Gastrocnemius medialis (tissue), 4 donors: ENCODE measurements at regions of chr12 and their contacts with region 1.

Region 1: GRCh38 chr12:47963340-47964040 is at the start of gene TMEM106C:
- DNase-seq: peak; percentile 72 to 87
- ATAC-seq: peak; percentile 88 to 91
- H3K4me3 ChIP-seq: peak within 1 kb of the TSS; percentile 83 to 97 (median 95)
- H3K27ac ChIP-seq: peak within 1 kb of the TSS; percentile 67 to 77 (median 70)
- H3K4me1 ChIP-seq: peaks cover 11 to 14% of the 10 kb centered on the region in 2 donors
- H3K27me3 ChIP-seq: no peaks in the 10 kb centered on the region
- CTCF ChIP-seq: peak; percentile 88 to 99 (median 96)
- POLR2A ChIP-seq: peak in 1 of 2 donors; percentile 7
- total RNA-seq, gene TMEM106C: 11.8 to 27.1 (median 24.8) TPM

Region 2: GRCh38 chr12:47870175-47870781 is 93.2 kb before region 1 on chr12:
- in situ Hi-C with region 1: no loop called
- intact Hi-C with region 1: loop called (anchors 1 kb)
- DNase-seq: peak; percentile 48 to 83
- ATAC-seq: peak; percentile 92 to 97
- H3K4me3 ChIP-seq: no peak overlapping the region
- H3K27ac ChIP-seq: peak overlapping the region; percentile 74 to 84 (median 78)
- H3K4me1 ChIP-seq: peaks cover 17 to 19% of the 10 kb centered on the region in 2 donors
- H3K27me3 ChIP-seq: no peaks in the 10 kb centered on the region
- CTCF ChIP-seq: peak; percentile 12 to 41 (median 23)
- POLR2A ChIP-seq: peak; percentile 7 to 30

Region 3: DNA sequence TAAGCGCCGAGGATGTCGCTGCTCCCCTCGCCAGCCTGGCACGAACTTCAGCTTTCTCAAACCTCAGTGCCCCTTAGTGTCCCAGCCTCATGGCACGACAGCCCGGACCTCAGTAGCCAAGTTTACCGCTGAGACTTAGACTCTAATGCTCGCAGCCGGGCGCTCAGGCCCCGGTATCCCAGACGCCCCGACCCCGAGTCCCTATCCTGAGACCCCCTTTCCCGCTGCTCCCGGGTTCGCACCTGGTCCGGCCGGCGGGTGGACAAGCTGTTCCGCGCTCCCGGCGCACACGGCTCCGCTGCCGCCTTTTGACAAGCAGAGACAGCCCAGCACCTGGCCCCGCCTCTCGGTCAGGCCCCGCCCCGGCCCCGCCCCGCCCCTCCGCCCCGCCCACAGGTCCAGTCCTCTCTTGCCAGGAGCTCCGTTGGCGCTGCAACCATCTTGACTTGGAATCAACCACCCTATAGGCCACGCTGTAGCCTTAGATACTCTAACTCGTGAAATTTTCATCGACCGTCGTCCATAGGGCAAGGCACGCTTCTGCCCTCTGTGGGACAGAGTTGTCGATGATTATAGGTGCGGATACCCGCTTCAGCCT is 58.7 kb before region 1 on chr12 and contains the start of gene VDR:
- in situ Hi-C with region 1: no loop called
- intact Hi-C with region 1: loop called (anchors 1 kb)
- DNase-seq: peak; percentile 63 to 74
- ATAC-seq: peak; percentile 83
- H3K4me3 ChIP-seq: peak within 1 kb of the TSS; percentile 60 to 83 (median 70)
- H3K27ac ChIP-seq: peak within 1 kb of the TSS; percentile 58 to 81 (median 70)
- H3K4me1 ChIP-seq: peaks cover 20% of the 10 kb centered on the region in 2 donors
- H3K27me3 ChIP-seq: peaks cover 0 to 10% (median 4%) of the 10 kb centered on the region in 3 donors
- CTCF ChIP-seq: peak in 1 of 5 experiments; percentile 20
- POLR2A ChIP-seq: peak; percentile 79 to 84
- total RNA-seq, gene VDR: 3.2 to 6.1 (median 4.4) TPM

Region 4: DNA sequence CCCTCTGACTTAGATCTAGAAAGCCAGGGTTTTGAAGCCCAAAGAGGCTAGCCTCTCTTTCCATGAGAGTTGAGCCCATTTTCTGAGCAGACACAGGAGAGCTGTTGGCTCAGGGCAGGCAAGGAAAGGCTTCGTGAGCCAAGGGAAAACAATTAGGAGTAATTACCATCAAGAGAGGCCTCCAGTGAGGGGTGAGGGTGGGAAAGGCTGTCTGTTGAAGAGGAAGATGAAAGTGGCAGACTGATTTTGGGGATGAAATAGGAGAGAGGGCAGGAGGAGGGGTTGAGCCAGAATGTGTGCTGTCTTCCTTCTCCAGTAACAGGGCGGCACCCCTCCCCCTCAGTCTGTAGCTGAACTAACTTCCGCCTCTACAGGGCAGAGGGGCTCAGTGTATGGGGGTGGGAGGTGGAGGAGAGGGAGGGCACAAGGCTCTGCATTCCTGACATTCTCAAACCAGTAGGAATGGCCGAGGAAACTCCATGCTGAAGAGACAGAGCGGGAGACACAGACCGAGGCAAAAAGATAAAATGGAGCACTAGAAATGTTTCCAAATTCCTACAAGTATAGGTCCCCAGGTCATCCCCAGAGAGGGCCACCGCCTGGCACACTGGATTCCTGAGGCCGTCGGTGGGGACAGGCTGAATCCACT is 73.9 kb after region 1 on chr12:
- in situ Hi-C with region 1: no loop called
- intact Hi-C with region 1: no loop called
- DNase-seq: no peak
- ATAC-seq: no peak
- H3K4me3 ChIP-seq: no peak overlapping the region
- H3K27ac ChIP-seq: no peak overlapping the region
- H3K4me1 ChIP-seq: no peaks in the 10 kb centered on the region
- H3K27me3 ChIP-seq: no peaks in the 10 kb centered on the region
- CTCF ChIP-seq: no peak
- POLR2A ChIP-seq: no peak

Region 5: GRCh38 chr12:48183091-48183875 is 219.8 kb after region 1 on chr12 and contains the start of gene CCDC184:
- in situ Hi-C with region 1: loop called in 3 of 4 experiments (anchors 25 kb)
- intact Hi-C with region 1: loop called (anchors 5 kb)
- DNase-seq: peak in 1 of 2 donors; percentile 26
- ATAC-seq: peak; percentile 40 to 55
- H3K4me3 ChIP-seq: peak within 1 kb of the TSS; percentile 58 to 62 (median 60)
- H3K27ac ChIP-seq: peak within 1 kb of the TSS; percentile 17 to 56 (median 38)
- H3K4me1 ChIP-seq: peaks cover 13 to 18% of the 10 kb centered on the region in 2 donors
- H3K27me3 ChIP-seq: peaks cover 44 to 64% (median 57%) of the 10 kb centered on the region in 3 donors
- CTCF ChIP-seq: no peak
- POLR2A ChIP-seq: peak in 1 of 2 donors; percentile 20
- total RNA-seq, gene CCDC184: 0.38 to 2.0 (median 1.1) TPM

Region 6: GRCh38 chr12:48197971-48198671 is 234.6 kb after region 1 on chr12:
- in situ Hi-C with region 1: loop called in 3 of 4 experiments (anchors 25 kb)
- intact Hi-C with region 1: loop called (anchors 5 kb)
- DNase-seq: peak; percentile 98 to 99
- ATAC-seq: peak; percentile 92 to 96
- H3K4me3 ChIP-seq: peak overlapping the region; percentile 88 to 94 (median 92)
- H3K27ac ChIP-seq: peak overlapping the region; percentile 97 to 100 (median 99)
- H3K4me1 ChIP-seq: peaks cover 20% of the 10 kb centered on the region in 2 donors
- H3K27me3 ChIP-seq: no peaks in the 10 kb centered on the region
- CTCF ChIP-seq: no peak
- POLR2A ChIP-seq: peak; percentile 97 to 98